Endothelial cell of umbilical vein (primary cell): ENCODE measurements at regions of chr17 and their contacts with region 1.

Region 1: DNA sequence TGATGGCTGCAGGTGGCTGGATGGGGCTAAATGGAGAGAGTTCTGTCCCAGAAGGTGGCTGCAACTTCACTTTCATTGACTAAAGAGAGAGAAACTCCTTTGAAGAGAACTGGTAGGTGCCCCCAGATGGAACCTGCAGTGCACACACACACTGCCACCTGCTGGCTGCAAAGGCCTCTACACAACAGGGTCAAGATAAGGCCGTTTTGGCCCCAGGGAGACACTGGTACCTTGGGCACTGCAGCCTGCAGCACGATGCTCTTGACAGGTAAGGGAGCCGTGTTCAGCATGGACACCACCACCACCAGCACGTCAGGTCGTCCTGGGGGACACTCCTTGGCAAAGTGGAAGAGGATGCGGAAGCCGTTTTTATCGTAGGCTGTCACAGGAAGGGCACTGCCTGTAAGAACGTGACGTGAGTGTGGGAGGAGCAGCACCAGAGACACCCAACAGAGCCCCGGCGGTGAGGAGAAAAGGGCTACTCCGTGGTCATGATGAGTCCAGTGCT is 22.7 kb downstream of the GGA3 start:
- DNase-seq: peak; percentile 62
- H3K4me3 ChIP-seq: no peak overlapping the region
- H3K27ac ChIP-seq: no peak overlapping the region
- H3K4me1 ChIP-seq: no peaks in the 10 kb centered on the region
- H3K27me3 ChIP-seq: no peaks in the 10 kb centered on the region
- CTCF ChIP-seq: peak; percentile 86 to 92
- POLR2A ChIP-seq: no peak

Region 2: GRCh38 chr17:75228305-75228704 is 10.4 kb before region 1 on chr17:
- CTCF ChIA-PET with region 1: interaction called, 20 read pairs
- POLR2A ChIA-PET with region 1: interaction called, 3 read pairs
- dilution Hi-C with region 1: no loop called
- intact Hi-C with region 1: no loop called
- DNase-seq: peak; percentile 57
- H3K4me3 ChIP-seq: no peak overlapping the region
- H3K27ac ChIP-seq: no peak overlapping the region
- H3K4me1 ChIP-seq: no peaks in the 10 kb centered on the region
- H3K27me3 ChIP-seq: no peaks in the 10 kb centered on the region
- CTCF ChIP-seq: no peak
- POLR2A ChIP-seq: no peak

Region 3: DNA sequence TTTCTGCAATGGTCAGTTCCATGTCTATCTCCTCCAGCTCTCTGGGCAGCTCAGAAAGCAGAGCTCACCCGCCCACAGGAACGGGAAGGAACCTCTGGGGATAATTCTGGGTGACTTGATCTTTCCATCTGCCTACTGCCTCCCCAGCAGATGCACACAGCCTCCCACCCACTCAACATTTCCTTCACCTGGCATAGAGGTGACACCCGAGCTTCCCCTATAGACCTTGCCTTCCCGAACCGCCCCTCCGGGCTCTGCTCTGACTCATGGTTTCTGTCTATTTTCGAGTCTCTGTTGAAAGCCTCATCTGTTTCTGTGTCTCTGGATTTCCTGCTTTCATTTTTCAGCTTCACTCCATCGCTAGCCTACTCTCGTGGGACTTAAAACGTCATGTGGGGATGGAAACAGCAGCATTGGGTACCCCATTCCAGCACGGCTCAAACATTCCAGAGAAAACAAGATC is 11.3 kb after region 1 on chr17:
- CTCF ChIA-PET with region 1: interaction called, 45 read pairs
- POLR2A ChIA-PET with region 1: no interaction called
- dilution Hi-C with region 1: no loop called
- intact Hi-C with region 1: no loop called
- DNase-seq: peak; percentile 85
- H3K4me3 ChIP-seq: peak overlapping the region in 2 of 3 experiments; percentile 12 to 33
- H3K27ac ChIP-seq: peak overlapping the region; percentile 31
- H3K4me1 ChIP-seq: peaks cover 11% of the 10 kb centered on the region
- H3K27me3 ChIP-seq: no peaks in the 10 kb centered on the region
- CTCF ChIP-seq: no peak
- POLR2A ChIP-seq: no peak

Region 4: DNA sequence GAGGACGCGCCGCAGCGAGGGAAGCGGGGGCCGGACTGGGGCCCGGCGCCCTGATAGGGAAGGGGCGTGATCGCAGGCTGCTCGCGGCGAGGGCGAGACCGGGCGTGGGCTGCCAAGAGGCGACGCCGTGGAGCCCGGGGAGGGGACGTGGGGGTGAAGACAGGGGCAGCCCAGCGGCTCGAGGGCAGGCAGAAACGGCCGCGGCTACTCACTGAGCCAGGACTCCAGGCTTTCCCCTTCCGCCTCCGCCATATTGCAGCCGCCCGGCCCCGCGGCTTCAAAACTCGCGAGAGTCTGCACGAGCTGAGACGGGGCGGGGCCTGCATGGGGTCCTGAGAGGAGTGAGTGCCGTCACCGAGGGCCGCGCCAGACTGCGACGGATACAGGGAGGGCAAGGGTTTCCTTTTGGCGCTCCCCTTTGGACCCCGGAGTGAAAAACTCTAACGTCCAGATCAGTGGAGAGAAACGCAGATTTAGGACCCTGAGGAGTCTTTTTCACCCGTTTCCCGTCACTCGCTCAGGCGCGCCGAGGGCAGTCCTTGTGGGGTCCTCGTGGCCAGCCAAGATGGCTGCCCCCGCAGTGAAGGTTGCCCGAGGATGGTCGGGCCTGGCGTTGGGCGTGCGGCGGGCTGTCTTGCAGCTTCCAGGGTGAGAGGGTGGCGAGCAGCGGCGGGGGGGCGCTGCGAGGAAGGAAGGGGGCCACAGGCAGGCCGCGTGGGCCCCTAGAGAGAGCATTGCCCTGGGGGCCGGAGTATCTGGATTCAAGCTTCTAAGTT is 22.8 kb after region 1 on chr17 and contains the starts of genes GGA3 and MRPS7:
- CTCF ChIA-PET with region 1: interaction called, 21 read pairs
- POLR2A ChIA-PET with region 1: interaction called, 5 read pairs
- dilution Hi-C with region 1: no loop called
- intact Hi-C with region 1: loop called (anchors 1 kb)
- DNase-seq: peak; percentile 95
- H3K4me3 ChIP-seq: peak within 1 kb of the TSS; percentile 64 to 92 (median 76)
- H3K27ac ChIP-seq: peak within 1 kb of the TSS; percentile 97
- H3K4me1 ChIP-seq: peaks cover 27% of the 10 kb centered on the region
- H3K27me3 ChIP-seq: no peaks in the 10 kb centered on the region
- CTCF ChIP-seq: no peak
- POLR2A ChIP-seq: peak; percentile 76
- total RNA-seq, gene GGA3: 39.2 and 62.9 TPM in 2 replicates
- total RNA-seq, gene MRPS7: 65.7 and 79.8 TPM in 2 replicates

Region 5: GRCh38 chr17:75271233-75271954 is 32.7 kb after region 1 on chr17:
- CTCF ChIA-PET with region 1: interaction called, 91 read pairs
- POLR2A ChIA-PET with region 1: interaction called, 4 read pairs
- dilution Hi-C with region 1: no loop called
- intact Hi-C with region 1: loop called (anchors 1 kb)
- DNase-seq: peak; percentile 54
- H3K4me3 ChIP-seq: peak overlapping the region; percentile 57 to 89 (median 61)
- H3K27ac ChIP-seq: peak overlapping the region; percentile 50
- H3K4me1 ChIP-seq: peaks cover 32% of the 10 kb centered on the region
- H3K27me3 ChIP-seq: no peaks in the 10 kb centered on the region
- CTCF ChIP-seq: peak; percentile 60 to 82
- POLR2A ChIP-seq: no peak

Region 6: GRCh38 chr17:75405365-75406221 is 166.9 kb after region 1 on chr17 and contains the start of gene GRB2:
- CTCF ChIA-PET with region 1: interaction called, 3 read pairs
- POLR2A ChIA-PET with region 1: no interaction called
- dilution Hi-C with region 1: no loop called
- intact Hi-C with region 1: loop called (anchors 2 kb)
- DNase-seq: peak; percentile 97
- H3K4me3 ChIP-seq: peak within 1 kb of the TSS; percentile 78 to 97 (median 96)
- H3K27ac ChIP-seq: peak within 1 kb of the TSS; percentile 54
- H3K4me1 ChIP-seq: peaks cover 12% of the 10 kb centered on the region
- H3K27me3 ChIP-seq: peaks cover 2% of the 10 kb centered on the region in 2 experiments
- CTCF ChIP-seq: no peak
- POLR2A ChIP-seq: peak; percentile 90
- total RNA-seq, gene GRB2: 93.9 and 94.8 TPM in 2 replicates

Region 7: DNA sequence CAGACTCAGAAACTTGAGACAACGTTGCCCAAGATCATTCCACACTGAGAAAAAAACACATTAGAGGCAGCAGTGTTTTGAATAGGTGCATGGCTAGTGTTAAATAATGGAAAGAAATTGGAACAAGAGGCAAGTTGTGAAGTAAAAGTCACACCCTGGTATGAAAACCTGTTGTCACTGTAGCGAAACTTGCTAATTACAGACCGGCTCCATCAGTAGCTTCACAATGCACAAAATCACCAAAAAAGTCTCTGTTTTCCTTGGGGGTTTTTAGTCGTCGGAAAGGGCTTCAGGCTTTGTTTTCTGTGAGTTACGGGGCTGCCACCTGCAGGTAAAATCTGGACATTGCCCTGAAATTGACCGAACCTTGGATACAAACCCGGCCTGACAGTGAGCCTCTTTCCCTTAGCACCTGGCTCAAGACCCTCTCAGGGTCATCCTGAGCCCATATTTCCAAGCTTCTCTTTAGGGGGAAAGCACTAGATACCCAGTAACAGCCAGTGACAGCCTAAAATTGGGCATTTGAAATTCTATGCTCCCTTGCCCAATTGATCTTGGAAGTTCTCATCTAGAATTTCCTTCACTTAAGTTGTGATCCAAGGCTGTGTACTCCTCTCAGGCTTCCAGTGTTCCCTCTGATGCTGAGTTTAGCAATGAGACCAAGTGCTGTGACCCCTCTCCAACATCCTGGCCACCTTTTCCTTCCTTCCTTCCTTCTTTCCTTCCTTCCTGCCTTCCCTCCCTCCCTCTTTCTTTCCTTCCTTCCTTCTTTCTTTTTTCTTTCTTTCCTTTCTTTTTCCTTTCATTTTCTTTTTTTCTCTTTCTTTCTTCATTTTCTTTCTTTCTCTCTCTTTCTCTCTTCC is 173.9 kb after region 1 on chr17:
- CTCF ChIA-PET with region 1: interaction called, 21 read pairs
- POLR2A ChIA-PET with region 1: interaction called, 3 read pairs
- dilution Hi-C with region 1: no loop called
- intact Hi-C with region 1: loop called (anchors 1 kb)
- DNase-seq: peak; percentile 74
- H3K4me3 ChIP-seq: peak overlapping the region in 1 of 3 experiments; percentile 27
- H3K27ac ChIP-seq: no peak overlapping the region
- H3K4me1 ChIP-seq: peaks cover 5% of the 10 kb centered on the region
- H3K27me3 ChIP-seq: peaks cover 2 to 3% of the 10 kb centered on the region in 2 experiments
- CTCF ChIP-seq: peak; percentile 72 to 77
- POLR2A ChIP-seq: no peak